ENCODE measurements at regions of chr2 and their contacts with region 1.

Region 1: DNA sequence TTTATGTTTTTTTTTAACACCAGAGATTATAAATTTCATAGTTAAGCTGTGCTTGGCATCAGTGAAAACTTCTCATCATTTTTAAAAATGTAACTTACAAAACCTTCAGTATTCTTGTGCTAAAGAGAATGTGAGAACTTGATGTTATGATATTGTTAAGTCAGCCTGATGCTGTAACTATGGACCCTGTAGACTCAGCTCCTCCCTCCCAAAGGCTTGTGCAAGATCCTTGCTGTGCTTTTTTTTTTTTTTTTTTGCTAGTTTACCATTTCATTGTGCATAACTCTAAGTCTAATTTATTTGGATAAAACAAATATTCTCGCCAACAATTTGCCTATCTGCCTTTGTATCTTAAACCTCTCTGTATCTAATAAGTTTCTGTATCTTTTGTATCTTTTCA is 12.9 kb upstream of the TFPI start:
- DNase-seq: no peak
- H3K4me3 Mint-ChIP-seq: no peak overlapping the region
- H3K27ac Mint-ChIP-seq: no peak overlapping the region
- H3K4me1 Mint-ChIP-seq: no peaks in the 10 kb centered on the region
- H3K27me3 Mint-ChIP-seq: no peaks in the 10 kb centered on the region
- CTCF ChIP-seq: no peak

Region 2: DNA sequence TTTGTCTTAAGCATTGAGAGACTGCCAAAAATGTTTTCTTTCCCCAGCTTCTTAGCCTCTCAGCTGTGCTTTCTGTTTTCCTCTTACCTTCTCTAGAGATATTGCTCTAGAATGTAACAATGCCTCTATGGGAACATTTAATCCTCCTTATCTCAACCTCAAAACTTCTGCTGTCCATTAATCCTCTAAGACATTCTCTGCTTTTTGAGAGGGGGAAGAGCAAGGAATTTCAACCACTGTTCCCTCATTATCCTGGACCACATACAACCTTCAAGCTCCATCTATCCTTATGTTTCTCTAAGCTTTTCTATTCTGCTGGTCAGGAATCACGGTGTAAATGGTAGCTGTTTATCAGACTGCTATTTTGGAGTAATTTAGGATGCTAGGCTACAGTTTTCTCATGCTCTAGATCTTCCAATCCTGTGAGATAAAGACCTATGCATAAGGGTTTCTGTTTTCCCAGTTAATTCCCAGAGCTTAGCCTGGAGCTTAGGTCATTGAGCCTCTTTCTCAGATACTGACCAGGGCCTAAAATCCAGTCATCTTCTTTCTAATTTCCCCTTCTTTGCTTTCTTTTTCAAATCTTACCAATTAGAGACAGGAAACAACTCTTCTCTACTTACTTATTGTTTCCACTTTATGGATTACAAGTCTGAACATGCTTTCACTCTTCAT is 401.1 kb before region 1 on chr2:
- CTCF ChIA-PET with region 1: no interaction called
- POLR2A ChIA-PET with region 1: no interaction called
- intact Hi-C with region 1: no loop called
- DNase-seq: no peak
- H3K4me3 Mint-ChIP-seq: no peak overlapping the region
- H3K27ac Mint-ChIP-seq: peak overlapping the region; percentile 9
- H3K4me1 Mint-ChIP-seq: peaks cover 6% of the 10 kb centered on the region
- H3K27me3 Mint-ChIP-seq: no peaks in the 10 kb centered on the region
- CTCF ChIP-seq: no peak

Region 3: DNA sequence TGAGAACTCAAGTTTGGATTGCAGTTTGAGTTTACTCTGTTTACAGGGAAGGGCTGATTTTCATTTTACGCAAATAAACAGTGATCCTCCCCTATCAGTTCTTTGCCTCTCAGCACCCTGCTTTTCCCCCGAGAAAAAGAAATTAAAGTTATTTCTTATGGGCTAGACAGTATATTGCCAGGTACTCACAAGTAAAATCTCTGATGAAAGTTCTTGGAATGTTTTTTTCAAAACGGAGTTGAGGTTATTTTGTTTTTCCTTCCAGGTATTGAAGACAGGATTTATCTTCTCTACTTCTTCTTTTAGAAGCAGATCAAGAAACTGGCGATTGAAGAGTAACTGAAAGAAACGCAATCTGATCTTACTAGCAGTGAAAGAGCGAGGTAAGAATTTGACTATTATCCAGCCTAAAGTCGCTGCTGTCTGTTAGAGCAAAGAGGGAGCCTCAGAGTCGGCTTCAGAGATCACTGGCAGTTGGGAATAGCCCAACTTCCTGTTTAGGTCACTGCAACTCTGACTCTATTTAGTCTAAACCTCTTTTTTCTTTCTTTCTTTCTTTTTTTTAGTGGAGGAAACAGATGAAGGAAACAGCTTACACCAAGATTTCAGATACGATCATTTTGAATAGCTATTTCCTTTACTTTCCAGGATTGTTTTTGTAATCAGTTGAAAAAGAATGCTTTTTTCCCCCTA is 13.0 kb before region 1 on chr2 and contains the start of gene TFPI:
- CTCF ChIA-PET with region 1: interaction called, 4 read pairs
- POLR2A ChIA-PET with region 1: interaction called, 25 read pairs
- intact Hi-C with region 1: no loop called
- DNase-seq: peak; percentile 72
- H3K4me3 Mint-ChIP-seq: peak within 1 kb of the TSS; percentile 87
- H3K27ac Mint-ChIP-seq: peak within 1 kb of the TSS; percentile 98
- H3K4me1 Mint-ChIP-seq: peaks cover 20% of the 10 kb centered on the region
- H3K27me3 Mint-ChIP-seq: no peaks in the 10 kb centered on the region
- CTCF ChIP-seq: no peak
- total RNA-seq, gene TFPI: 67.4 and 71.1 TPM in 2 replicates

Measured in MCF 10A (cell line).